ENCODE measurements at regions of chr5 and their contacts with region 1.

Region 1: DNA sequence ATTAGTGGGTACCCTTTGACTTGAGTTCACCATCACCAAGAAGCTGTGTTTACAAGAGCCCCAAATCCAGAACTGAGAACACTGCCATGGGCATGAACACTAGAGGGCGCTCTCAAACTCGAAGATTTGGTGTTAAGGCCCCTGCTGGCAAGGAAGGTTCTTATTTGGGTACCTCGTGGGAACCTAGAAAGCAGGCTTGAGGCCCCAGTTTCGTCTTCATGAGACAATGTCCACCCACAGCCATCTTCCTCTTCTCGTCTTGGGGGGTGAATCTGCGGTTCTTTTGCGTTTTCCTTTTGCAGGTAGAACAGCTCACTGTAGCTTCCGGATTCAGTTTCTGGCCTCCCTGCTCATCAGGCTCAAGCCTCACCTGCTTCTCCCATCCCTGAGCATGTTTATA is 184.0 kb downstream of the SEMA5A start:
- DNase-seq: no peak
- ATAC-seq: peak; percentile 51

Region 2: GRCh38 chr5:9498541-9499497 is 137.0 kb after region 1 on chr5:
- intact Hi-C with region 1: loop called (anchors 5 kb)
- DNase-seq: no peak
- ATAC-seq: no peak

Region 3: DNA sequence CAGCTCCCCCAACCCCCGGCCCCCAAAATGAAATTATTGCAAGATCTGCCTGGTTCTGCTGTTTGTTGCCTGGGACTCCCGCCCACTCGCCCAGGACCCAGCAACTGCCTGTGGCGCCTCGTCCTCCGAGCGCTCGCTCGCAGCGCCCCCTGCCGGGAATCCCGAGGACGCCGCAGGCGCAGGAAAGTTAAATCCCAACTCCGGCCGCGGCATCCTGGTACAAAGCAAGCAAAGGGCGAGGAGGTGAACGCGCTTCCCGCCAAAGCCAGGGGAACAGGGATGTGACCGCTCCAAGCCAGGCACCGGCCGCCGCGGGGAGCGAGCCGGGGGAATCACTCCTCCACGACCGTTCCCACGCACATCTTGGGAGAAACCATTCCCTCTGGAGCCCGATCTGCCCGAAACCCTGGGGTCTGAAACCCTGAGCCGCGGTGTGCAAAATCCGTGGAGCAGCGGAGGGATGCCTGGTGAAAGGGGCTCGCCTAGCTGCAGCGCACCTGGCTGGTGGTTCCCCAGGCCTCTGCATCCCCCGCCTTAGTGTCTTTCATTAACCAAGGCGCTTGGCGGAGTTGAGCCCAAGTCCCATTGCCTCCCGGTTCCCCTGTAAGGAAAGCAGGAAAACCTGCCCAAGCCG is 182.8 kb after region 1 on chr5:
- intact Hi-C with region 1: loop called (anchors 1 kb)
- DNase-seq: peak; percentile 89
- ATAC-seq: peak; percentile 80

Region 4: GRCh38 chr5:9562141-9562540 is 200.3 kb after region 1 on chr5:
- intact Hi-C with region 1: no loop called
- DNase-seq: no peak
- ATAC-seq: no peak

Region 5: GRCh38 chr5:9622971-9623421 is 261.2 kb after region 1 on chr5:
- intact Hi-C with region 1: loop called (anchors 10 kb)
- DNase-seq: no peak
- ATAC-seq: no peak

Region 6: DNA sequence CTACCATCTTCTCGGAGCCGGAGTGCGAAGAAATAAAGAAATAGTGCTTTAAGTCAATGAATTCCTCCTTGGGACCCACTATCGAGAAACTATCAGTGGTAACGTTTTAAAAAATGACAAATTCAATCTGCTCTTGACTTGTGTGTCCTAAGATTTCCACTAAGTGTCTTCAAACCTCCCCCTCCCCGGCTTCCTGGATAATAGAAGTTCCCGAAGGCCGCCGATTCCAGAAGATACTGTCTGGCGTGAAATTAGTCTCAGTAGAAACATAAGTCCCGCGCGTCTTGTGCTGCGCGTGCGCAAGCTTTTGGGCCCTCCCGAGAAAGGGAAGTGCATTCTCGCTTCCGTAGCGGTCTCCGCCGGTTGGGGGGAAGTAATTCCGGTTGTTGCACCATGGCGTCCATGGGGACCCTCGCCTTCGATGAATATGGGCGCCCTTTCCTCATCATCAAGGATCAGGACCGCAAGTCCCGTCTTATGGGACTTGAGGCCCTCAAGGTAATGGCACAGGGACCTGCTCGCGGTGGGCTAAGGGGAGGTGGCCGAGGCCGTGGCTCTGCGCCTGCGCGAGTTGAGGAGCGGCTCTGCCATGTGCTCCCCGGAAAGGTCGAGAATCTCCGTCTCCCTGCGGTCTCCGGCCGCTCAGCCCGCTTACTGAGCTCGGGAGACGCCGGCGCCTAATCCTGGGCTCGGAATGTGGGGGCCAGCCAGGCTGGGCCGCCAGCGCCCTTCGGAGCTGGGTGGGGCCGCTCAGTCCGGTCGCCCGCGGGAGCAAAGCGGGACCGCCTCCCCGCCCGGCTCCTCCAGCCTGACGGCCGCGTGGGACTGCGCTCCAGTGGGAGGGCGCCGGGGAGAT is 888.3 kb after region 1 on chr5 and contains the start of gene CCT5:
- intact Hi-C with region 1: loop called (anchors 10 kb)
- DNase-seq: peak; percentile 92
- ATAC-seq: peak; percentile 94
- total RNA-seq, gene CCT5: 104 TPM

Measured in Right ventricle myocardium inferior (tissue), 1 donor.